ENCODE measurements at regions of chr6 and their contacts with region 1.

Region 1: DNA sequence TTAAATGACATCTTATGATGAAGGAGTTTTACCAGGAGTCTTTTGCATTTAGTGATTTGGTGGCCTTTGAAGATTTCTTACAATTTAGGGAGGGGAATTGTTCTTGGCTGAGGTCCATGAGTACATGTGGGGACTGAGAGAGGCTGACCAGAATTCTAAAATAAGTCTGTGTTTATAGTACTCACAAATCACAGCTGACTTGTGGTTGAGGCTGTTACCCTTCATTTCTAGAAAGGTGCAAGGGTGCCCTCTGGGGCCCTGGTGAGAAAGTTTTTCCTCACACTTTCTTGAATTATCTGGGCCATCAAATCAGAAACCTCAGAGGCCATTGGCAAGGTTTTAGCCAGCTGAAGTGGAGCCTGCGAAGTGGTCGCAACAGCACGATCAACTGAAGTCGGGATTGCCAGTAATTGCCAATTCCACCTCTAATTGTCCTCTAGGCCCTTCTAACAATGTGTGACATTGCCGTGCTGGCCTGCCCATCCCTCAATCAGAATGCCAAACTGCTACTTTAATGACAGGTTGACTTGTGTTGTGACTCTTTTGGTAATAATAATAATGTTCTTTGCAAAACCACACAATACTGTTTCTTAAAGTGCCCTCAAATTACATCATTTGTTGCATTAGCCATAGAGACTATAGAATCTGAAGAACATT is 221.6 kb downstream of the OGFRL1 start:
- DNase-seq: peak; percentile 15 to 30
- ATAC-seq: peak; percentile 75 to 76
- H3K4me3 ChIP-seq: no peak overlapping the region
- H3K27ac ChIP-seq: no peak overlapping the region
- H3K4me1 ChIP-seq: peaks cover 6 to 9% of the 10 kb centered on the region in 2 donors
- H3K27me3 ChIP-seq: no peaks in the 10 kb centered on the region
- CTCF ChIP-seq: peak; percentile 35 to 64 (median 52)
- POLR2A ChIP-seq: no peak

Region 2: DNA sequence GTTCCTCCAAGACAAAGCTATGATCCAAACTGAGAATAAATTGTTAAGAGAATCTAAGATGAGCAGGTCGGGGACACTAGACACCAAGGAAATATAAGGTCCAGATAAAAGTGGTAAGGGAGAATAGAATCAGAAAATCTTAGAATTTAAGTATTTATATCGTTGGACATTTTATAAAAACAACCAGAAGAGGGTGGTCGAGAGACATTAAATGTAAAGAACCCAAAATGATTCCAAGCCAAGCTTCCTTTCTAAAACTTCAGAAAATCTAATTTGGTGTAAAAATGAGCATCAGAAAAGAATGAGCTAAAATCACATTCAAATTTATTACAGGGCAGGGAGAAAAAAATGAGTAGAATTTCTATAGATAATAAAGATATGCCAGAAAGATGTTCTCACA is 319.4 kb before region 1 on chr6:
- in situ Hi-C with region 1: loop called in 1 of 4 experiments (anchors 25 kb)
- intact Hi-C with region 1: no loop called
- DNase-seq: no peak
- ATAC-seq: no peak
- H3K4me3 ChIP-seq: no peak overlapping the region
- H3K27ac ChIP-seq: no peak overlapping the region
- H3K4me1 ChIP-seq: no peaks in the 10 kb centered on the region
- H3K27me3 ChIP-seq: no peaks in the 10 kb centered on the region
- CTCF ChIP-seq: peak in 3 of 5 experiments; percentile 21 to 31 (median 28)
- POLR2A ChIP-seq: no peak

Region 3: DNA sequence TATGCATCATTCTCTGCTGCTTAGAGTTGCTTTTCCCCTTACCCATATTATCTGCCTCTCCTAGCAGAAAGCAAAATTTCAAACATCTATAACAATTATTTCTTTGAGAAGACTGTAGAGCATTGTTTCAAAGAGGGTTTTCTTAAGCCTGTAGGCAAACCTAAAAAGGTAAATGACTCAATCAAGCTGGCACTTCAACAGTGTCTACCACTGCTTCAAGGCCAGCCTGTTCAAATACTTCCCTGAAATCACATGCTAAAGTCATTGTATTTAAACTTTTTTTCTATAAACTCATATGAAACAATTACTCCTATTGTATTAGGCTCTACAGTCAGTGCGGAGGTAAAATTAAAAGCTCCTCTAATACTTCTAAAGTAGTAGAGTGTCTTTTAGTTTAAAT is 134.5 kb before region 1 on chr6:
- in situ Hi-C with region 1: loop called in 3 of 4 experiments (anchors 5 to 10 kb)
- intact Hi-C with region 1: no loop called
- DNase-seq: no peak
- ATAC-seq: peak; percentile 58 to 64
- H3K4me3 ChIP-seq: no peak overlapping the region
- H3K27ac ChIP-seq: peak overlapping the region in 1 of 4 donors; percentile 25
- H3K4me1 ChIP-seq: peaks cover 8 to 26% of the 10 kb centered on the region in 2 donors
- H3K27me3 ChIP-seq: no peaks in the 10 kb centered on the region
- CTCF ChIP-seq: no peak
- POLR2A ChIP-seq: no peak

Region 4: GRCh38 chr6:71444222-71444621 is 66.0 kb before region 1 on chr6:
- in situ Hi-C with region 1: no loop called
- intact Hi-C with region 1: loop called (anchors 5 kb)
- DNase-seq: no peak
- ATAC-seq: peak in 1 of 2 donors; percentile 69
- H3K4me3 ChIP-seq: no peak overlapping the region
- H3K27ac ChIP-seq: no peak overlapping the region
- H3K4me1 ChIP-seq: no peaks in the 10 kb centered on the region
- H3K27me3 ChIP-seq: no peaks in the 10 kb centered on the region
- CTCF ChIP-seq: peak in 2 of 5 experiments; percentile 23 to 36
- POLR2A ChIP-seq: no peak